Calu3 (cell line): ENCODE measurements at regions of chr5 and their contacts with region 1.

Region 1: DNA sequence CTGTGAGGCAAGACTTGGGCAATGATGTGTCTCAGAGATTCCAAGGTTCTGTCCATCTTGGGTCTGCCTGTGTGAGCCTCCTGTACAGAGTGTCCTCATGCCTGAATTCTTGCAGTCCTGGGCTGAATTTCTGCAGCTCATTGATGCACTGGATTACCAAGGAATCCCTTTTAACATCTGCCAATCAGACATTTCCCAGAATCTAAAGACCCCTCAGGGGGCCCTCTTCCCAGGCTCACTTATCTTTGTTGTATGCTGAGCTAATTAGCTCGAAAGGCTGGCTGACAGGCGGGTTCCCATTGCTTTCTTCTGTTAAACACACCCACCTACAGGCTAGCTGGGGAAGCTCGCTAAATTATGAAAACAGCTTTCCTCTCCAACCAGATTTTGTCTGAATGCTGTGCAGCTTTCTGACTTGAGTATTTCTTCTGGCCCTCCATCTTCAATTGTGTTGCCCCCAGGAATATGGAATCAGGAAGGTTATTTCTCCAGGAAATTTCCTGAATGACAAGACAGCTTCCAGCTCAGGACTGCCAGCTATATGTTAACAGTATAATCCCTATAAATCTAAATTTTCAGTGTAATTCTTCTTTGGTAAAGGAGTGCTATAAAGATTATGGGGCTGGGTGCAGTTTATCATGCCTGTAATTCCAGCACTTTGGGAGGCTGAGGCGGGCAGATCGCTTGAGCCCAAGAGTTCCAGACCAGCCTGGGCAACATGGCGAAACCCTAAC is at the start of gene LIX1:
- DNase-seq: peak; percentile 45
- H3K4me3 Mint-ChIP-seq: no peak within 1 kb of the TSS
- H3K27ac Mint-ChIP-seq: no peak within 1 kb of the TSS
- H3K4me1 Mint-ChIP-seq: peaks cover 7% of the 10 kb centered on the region
- H3K27me3 Mint-ChIP-seq: peaks cover 8% of the 10 kb centered on the region
- CTCF ChIP-seq: peak; percentile 40
- total RNA-seq, gene LIX1: not detected in 2 replicates

Region 2: DNA sequence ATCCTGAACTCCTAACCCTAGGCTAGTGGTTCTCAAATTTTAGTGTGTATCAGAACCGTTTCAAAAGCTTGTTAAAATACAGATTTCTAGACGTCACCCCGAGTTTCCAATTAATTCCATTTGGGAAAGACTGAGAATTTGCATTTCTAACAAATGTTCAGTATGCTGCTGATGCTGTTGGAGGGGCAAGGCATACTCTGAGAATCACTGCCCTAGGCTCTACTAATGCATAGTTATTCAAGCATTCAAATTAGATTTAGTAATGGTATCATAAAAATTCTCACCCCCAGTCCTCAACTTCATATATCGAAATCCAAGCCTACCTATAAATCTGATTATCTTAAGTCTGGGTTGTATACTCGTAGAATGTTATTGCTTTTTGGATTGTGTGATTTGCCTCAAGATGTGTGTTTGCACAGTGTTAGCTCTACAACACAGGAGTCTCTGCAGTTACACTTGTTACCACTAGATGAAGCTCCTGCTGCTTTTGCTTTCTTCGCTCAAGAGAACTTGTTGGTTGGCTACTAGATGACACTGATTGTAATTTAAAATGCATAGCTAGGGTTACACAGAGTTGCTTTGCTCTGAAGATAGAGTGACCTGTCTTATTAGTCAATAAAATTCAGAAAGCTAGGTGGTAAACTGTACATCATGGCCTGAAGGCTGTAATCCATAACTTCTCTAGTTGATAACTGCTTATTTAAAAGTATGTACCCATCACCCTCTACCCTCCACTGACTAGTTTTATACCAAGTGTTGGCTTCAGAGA is 273.9 kb before region 1 on chr5:
- CTCF ChIA-PET with region 1: interaction called, 18 read pairs
- intact Hi-C with region 1: loop called (anchors 1 kb)
- DNase-seq: peak; percentile 40
- H3K4me3 Mint-ChIP-seq: no peak overlapping the region
- H3K27ac Mint-ChIP-seq: no peak overlapping the region
- H3K4me1 Mint-ChIP-seq: peaks cover 6% of the 10 kb centered on the region
- H3K27me3 Mint-ChIP-seq: no peaks in the 10 kb centered on the region
- CTCF ChIP-seq: peak; percentile 85

Region 3: DNA sequence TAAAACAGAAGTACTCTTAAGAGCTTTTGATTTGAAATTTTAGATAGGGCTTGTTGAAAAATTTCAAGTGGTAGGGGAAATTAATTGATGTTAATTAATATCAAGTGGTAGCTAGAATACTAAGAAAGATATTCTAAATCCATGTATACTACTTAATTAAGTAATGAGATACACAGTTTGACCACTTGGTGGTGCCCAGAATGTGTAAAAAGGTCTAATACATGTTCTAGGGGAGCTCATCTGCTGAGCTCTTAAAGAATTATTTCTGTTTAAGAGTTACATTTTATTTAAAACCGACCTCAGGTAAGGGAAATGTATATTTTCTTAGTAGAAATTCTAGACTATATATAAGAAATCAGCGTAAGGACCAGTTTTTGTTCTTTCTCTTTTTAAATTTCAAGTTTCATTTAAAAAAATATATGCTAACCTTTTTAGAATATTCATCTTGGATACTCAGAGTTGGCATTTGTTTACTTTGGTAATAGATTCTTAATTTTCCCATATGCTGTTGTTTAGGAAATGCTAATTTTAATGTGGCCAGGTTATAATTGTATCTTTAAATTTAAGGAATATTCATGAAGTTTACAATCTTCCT is 145.3 kb before region 1 on chr5:
- CTCF ChIA-PET with region 1: interaction called, 19 read pairs
- intact Hi-C with region 1: loop called (anchors 1 kb)
- DNase-seq: peak; percentile 13
- H3K4me3 Mint-ChIP-seq: no peak overlapping the region
- H3K27ac Mint-ChIP-seq: no peak overlapping the region
- H3K4me1 Mint-ChIP-seq: no peaks in the 10 kb centered on the region
- H3K27me3 Mint-ChIP-seq: no peaks in the 10 kb centered on the region
- CTCF ChIP-seq: no peak

Region 4: GRCh38 chr5:97044052-97044451 is 98.6 kb before region 1 on chr5:
- CTCF ChIA-PET with region 1: interaction called, 5 read pairs
- intact Hi-C with region 1: loop called (anchors 10 kb)
- DNase-seq: peak; percentile 39
- H3K4me3 Mint-ChIP-seq: no peak overlapping the region
- H3K27ac Mint-ChIP-seq: no peak overlapping the region
- H3K4me1 Mint-ChIP-seq: peaks cover 26% of the 10 kb centered on the region
- H3K27me3 Mint-ChIP-seq: no peaks in the 10 kb centered on the region
- CTCF ChIP-seq: no peak

Region 5: GRCh38 chr5:97062046-97062445 is 80.6 kb before region 1 on chr5:
- CTCF ChIA-PET with region 1: interaction called, 12 read pairs
- intact Hi-C with region 1: no loop called
- DNase-seq: no peak
- H3K4me3 Mint-ChIP-seq: no peak overlapping the region
- H3K27ac Mint-ChIP-seq: no peak overlapping the region
- H3K4me1 Mint-ChIP-seq: peaks cover 6% of the 10 kb centered on the region
- H3K27me3 Mint-ChIP-seq: peaks cover 5% of the 10 kb centered on the region
- CTCF ChIP-seq: no peak